Activated T-helper 2 cell treated with anti-CD3 and anti-CD28 coated beads, Interferon-gamma antibody, Interleukin-2, Interleukin-4, amounts not matched to agents 10 μg/mL and 5 μg/mL and 100 μg/mL, durations not matched to agents 14 hours and 24 hours and 36 hours (primary cell): ENCODE measurements at regions of chr5 and their contacts with region 1.

Region 1: GRCh38 chr5:23614422-23614821 is 107.0 kb downstream of the PRDM9 start:
- DNase-seq: no peak
- H3K4me3 Mint-ChIP-seq: no peak overlapping the region
- H3K27ac Mint-ChIP-seq: no peak overlapping the region
- H3K4me1 Mint-ChIP-seq: no peaks in the 10 kb centered on the region
- H3K27me3 Mint-ChIP-seq: no peaks in the 10 kb centered on the region

Region 2: GRCh38 chr5:23684103-23684502 is 69.7 kb after region 1 on chr5:
- intact Hi-C with region 1: loop called (anchors 2 kb)
- DNase-seq: no peak
- H3K4me3 Mint-ChIP-seq: no peak overlapping the region
- H3K27ac Mint-ChIP-seq: no peak overlapping the region
- H3K4me1 Mint-ChIP-seq: no peaks in the 10 kb centered on the region
- H3K27me3 Mint-ChIP-seq: no peaks in the 10 kb centered on the region